ENCODE measurements at regions of chr3 and their contacts with region 1.

Region 1: GRCh38 chr3:120357807-120358206 is 8.7 kb upstream of the LRRC58 start:
- DNase-seq: no peak
- H3K4me3 Mint-ChIP-seq: no peak overlapping the region
- H3K27ac Mint-ChIP-seq: no peak overlapping the region
- H3K4me1 Mint-ChIP-seq: no peaks in the 10 kb centered on the region
- H3K27me3 Mint-ChIP-seq: peaks cover 3% of the 10 kb centered on the region

Region 2: DNA sequence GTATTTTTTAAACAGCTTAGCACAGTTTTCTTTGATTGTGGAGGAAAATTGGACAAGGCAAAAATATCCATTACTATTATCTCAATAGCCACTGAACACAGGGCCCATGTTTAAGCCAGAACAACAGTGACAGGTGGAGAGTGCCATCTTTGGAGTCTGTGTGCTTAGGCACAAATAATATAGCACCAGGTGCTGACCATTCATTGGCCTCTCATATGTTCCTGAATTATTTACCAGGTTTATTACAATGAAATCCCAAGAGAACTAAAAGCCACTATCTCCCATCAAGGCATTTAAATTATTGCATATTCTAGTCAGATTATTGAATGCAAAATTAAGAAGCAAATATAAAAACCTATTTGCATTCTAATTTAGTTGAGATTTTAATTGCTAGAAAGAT is 112.4 kb before region 1 on chr3:
- CTCF ChIA-PET with region 1: interaction called, 4 read pairs
- intact Hi-C with region 1: loop called (anchors 1 kb)
- DNase-seq: no peak
- H3K4me3 Mint-ChIP-seq: no peak overlapping the region
- H3K27ac Mint-ChIP-seq: no peak overlapping the region
- H3K4me1 Mint-ChIP-seq: no peaks in the 10 kb centered on the region
- H3K27me3 Mint-ChIP-seq: peaks cover 5% of the 10 kb centered on the region

Measured in activated naive CD4-positive, alpha-beta T cell treated with anti-CD3 and anti-CD28 coated beads for 36 hours (primary cell).